ENCODE measurements at regions of chr7 and their contacts with region 1.

Region 1: GRCh38 chr7:99364961-99365817 is 9.3 kb upstream of the ARPC1B start:
- DNase-seq: peak; percentile 44
- H3K4me3 ChIP-seq: no peak overlapping the region
- H3K27ac ChIP-seq: no peak overlapping the region
- H3K4me1 ChIP-seq: no peaks in the 10 kb centered on the region
- H3K27me3 ChIP-seq: no peaks in the 10 kb centered on the region
- CTCF ChIP-seq: peak; percentile 44 to 76
- POLR2A ChIP-seq: no peak

Region 2: GRCh38 chr7:99083068-99083651 is 282.0 kb before region 1 on chr7:
- CTCF ChIA-PET with region 1: no interaction called
- POLR2A ChIA-PET with region 1: no interaction called
- dilution Hi-C with region 1: no loop called
- intact Hi-C with region 1: no loop called
- DNase-seq: no peak
- H3K4me3 ChIP-seq: no peak overlapping the region
- H3K27ac ChIP-seq: no peak overlapping the region
- H3K4me1 ChIP-seq: peaks cover 5% of the 10 kb centered on the region
- H3K27me3 ChIP-seq: no peaks in the 10 kb centered on the region
- CTCF ChIP-seq: no peak
- POLR2A ChIP-seq: no peak

Region 3: GRCh38 chr7:99386584-99387238 is 21.5 kb after region 1 on chr7:
- CTCF ChIA-PET with region 1: interaction called, 26 read pairs
- POLR2A ChIA-PET with region 1: no interaction called
- dilution Hi-C with region 1: no loop called
- intact Hi-C with region 1: loop called (anchors 1 kb)
- DNase-seq: peak; percentile 42
- H3K4me3 ChIP-seq: no peak overlapping the region
- H3K27ac ChIP-seq: no peak overlapping the region
- H3K4me1 ChIP-seq: no peaks in the 10 kb centered on the region
- H3K27me3 ChIP-seq: no peaks in the 10 kb centered on the region
- CTCF ChIP-seq: peak; percentile 27 to 29
- POLR2A ChIP-seq: peak; percentile 33

Region 4: GRCh38 chr7:99392677-99393354 is 27.6 kb after region 1 on chr7:
- CTCF ChIA-PET with region 1: interaction called, 26 read pairs
- POLR2A ChIA-PET with region 1: no interaction called
- dilution Hi-C with region 1: no loop called
- intact Hi-C with region 1: no loop called
- DNase-seq: peak; percentile 50
- H3K4me3 ChIP-seq: peak overlapping the region in 1 of 3 experiments; percentile 40
- H3K27ac ChIP-seq: peak overlapping the region; percentile 31
- H3K4me1 ChIP-seq: peaks cover 16% of the 10 kb centered on the region
- H3K27me3 ChIP-seq: no peaks in the 10 kb centered on the region
- CTCF ChIP-seq: no peak
- POLR2A ChIP-seq: peak; percentile 35

Region 5: DNA sequence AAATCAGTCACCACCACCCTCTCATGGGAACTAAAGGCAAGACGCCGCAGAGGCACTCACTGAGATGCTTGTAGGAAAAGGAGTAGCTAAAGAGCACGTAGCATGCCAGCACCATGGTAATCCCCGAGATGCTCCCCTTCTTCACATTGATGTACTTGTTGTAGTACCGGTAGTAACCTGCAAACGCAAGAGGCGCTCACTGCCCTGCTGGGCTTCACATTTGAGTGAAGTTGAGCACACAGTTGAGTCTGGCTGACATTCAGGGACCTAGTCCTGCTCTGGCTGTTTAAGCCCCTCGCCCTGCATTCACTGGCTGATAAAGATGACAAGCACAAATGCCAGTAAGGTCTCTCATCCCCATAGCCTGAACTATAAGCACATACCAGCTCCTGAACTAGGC is 93.9 kb after region 1 on chr7:
- CTCF ChIA-PET with region 1: no interaction called
- POLR2A ChIA-PET with region 1: no interaction called
- dilution Hi-C with region 1: no loop called
- intact Hi-C with region 1: no loop called
- DNase-seq: peak; percentile 17
- H3K4me3 ChIP-seq: no peak overlapping the region
- H3K27ac ChIP-seq: no peak overlapping the region
- H3K4me1 ChIP-seq: no peaks in the 10 kb centered on the region
- H3K27me3 ChIP-seq: no peaks in the 10 kb centered on the region
- CTCF ChIP-seq: peak; percentile 25 to 27
- POLR2A ChIP-seq: no peak

Measured in endothelial cell of umbilical vein (primary cell).